GM12878 (cell line): ENCODE measurements at regions of chr4 and their contacts with region 1.

Region 1: DNA sequence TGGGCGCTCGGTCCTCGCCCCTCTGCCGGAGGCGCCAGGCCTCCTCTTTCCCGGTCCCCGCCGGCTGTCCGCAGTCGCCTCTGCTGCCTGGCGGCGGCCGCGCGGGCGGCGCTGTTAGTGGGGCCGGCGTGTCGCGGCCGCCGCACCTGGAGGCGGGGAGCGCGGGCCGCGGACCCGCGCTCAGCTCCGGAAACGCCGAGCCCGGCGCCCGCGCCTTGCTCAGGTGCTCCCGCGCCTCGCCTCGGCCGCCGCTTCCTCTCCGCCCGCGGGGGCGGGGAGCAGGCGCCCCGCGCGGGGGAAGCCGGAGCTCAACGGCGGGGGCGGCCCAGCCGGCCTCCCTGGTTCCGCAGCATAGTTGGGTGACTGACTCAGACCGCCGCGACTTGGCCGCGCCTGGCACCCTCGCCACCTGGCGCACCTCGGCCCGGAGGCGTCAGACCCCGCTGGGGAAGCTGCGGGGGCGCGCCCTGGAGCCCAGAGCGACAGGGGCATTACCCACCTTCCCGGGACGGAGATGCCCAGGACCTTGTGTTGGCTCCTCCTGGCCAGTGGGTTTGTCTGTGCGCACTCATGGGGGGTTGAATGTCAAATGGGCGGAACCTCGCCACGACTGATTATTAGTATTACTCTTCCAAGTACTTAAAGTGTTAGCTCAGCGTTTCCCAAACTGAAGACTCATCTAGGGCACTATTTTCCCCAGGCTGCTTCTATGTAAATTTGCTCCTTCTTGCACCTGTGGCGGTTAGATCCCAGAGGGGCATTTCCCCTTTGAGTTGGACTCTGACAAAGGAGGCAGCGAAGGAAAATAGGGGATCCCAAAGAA is at the start of gene ARAP2:
- DNase-seq: no peak
- ATAC-seq: peak; percentile 72
- H3K4me3 ChIP-seq: peak within 1 kb of the TSS; percentile 84
- H3K27ac ChIP-seq: peak within 1 kb of the TSS; percentile 88
- H3K4me1 ChIP-seq: no peaks in the 10 kb centered on the region
- H3K27me3 ChIP-seq: no peaks in the 10 kb centered on the region
- CTCF ChIP-seq: peak in 1 of 3 experiments; percentile 12; a peak in 1 of 6 replicates
- EP300 ChIP-seq: no peak
- POLR2A ChIP-seq: peak; percentile 66; the same call in 1 of the 2 replicates
- RAD21 ChIP-seq: 0 out of 2 replicates have a peak, but pooled peaks have one; percentile 10
- polyA plus RNA-seq, gene ARAP2: 5.4 to 5.7 TPM

Region 2: DNA sequence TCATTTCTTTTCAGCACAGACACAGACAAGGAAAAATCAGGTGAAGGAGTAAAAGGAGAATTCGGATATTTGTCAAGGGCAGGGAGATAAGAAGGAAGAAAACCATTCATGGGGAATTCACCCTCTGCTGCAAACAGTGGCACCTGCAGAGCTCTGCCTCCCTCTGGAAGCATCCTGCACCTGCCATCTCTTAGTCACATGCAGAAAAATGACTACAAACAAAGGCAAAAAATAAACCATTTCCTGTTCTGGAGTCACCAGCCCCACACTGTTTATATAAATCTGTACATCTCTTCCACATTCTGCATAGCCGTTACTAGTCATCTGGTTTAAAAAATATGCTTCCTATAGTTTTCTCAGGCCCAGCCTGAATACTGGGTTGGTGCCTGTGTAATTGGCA is 205.4 kb before region 1 on chr4:
- CTCF ChIA-PET with region 1: no interaction called
- POLR2A ChIA-PET with region 1: no interaction called
- RAD21 ChIA-PET with region 1: no interaction called
- SMC1A ChIA-PET with region 1: no interaction called
- in situ Hi-C with region 1: no loop called
- intact Hi-C with region 1: no loop called
- DNase-seq: no peak
- ATAC-seq: peak; percentile 45; the same call in 2 of the 3 replicates
- H3K4me3 ChIP-seq: no peak overlapping the region
- H3K27ac ChIP-seq: no peak overlapping the region
- H3K4me1 ChIP-seq: no peaks in the 10 kb centered on the region
- H3K27me3 ChIP-seq: no peaks in the 10 kb centered on the region
- CTCF ChIP-seq: no peak
- EP300 ChIP-seq: no peak
- POLR2A ChIP-seq: no peak
- RAD21 ChIP-seq: no peak

Region 3: DNA sequence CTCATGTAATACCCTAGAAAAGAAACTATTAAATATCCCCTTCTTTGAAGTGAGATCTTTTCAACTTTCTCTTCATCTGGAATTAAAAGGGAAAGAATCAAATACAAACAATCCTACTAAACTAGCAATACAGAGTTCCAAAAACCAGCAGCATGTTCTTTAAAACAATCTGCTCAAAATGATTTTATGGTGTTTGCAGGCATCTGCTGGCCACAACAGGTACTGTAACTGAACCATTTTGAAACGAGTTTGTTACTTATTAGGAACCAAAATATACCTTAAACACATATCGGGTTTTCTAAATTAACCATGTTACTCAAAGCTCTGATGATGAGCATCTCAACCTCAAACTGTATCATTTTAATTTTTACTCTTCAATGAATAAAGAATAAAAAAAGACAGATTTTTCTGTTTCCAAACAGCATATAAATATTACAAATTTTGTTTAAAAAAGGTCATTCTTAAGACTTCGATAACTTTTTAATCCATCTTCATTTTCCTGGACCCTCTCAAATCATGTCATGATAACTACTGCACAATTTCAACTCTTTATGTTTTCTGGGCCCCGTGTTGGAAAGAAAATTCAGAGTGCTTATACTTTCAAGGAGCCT is 56.6 kb before region 1 on chr4:
- CTCF ChIA-PET with region 1: interaction called, 7 read pairs
- POLR2A ChIA-PET with region 1: interaction called, 3 read pairs
- RAD21 ChIA-PET with region 1: interaction called, 11 read pairs
- SMC1A ChIA-PET with region 1: interaction called, 21 read pairs
- in situ Hi-C with region 1: no loop called
- intact Hi-C with region 1: no loop called
- DNase-seq: no peak
- ATAC-seq: peak; percentile 27; the same call in 1 of the 3 replicates
- H3K4me3 ChIP-seq: no peak overlapping the region
- H3K27ac ChIP-seq: no peak overlapping the region
- H3K4me1 ChIP-seq: peaks cover 6% of the 10 kb centered on the region
- H3K27me3 ChIP-seq: no peaks in the 10 kb centered on the region
- CTCF ChIP-seq: peak; percentile 54 to 70 (median 65)
- EP300 ChIP-seq: no peak
- POLR2A ChIP-seq: no peak
- RAD21 ChIP-seq: peak; percentile 70

Region 4: GRCh38 chr4:36224972-36225903 is 19.2 kb before region 1 on chr4:
- CTCF ChIA-PET with region 1: interaction called, 4 read pairs
- POLR2A ChIA-PET with region 1: interaction called, 10 read pairs
- RAD21 ChIA-PET with region 1: interaction called, 16 read pairs
- SMC1A ChIA-PET with region 1: interaction called, 16 read pairs
- in situ Hi-C with region 1: no loop called
- intact Hi-C with region 1: no loop called
- DNase-seq: no peak
- ATAC-seq: peak; percentile 62
- H3K4me3 ChIP-seq: peak overlapping the region; percentile 37; the same call in 1 of the 2 replicates
- H3K27ac ChIP-seq: no peak overlapping the region
- H3K4me1 ChIP-seq: no peaks in the 10 kb centered on the region
- H3K27me3 ChIP-seq: no peaks in the 10 kb centered on the region
- CTCF ChIP-seq: no peak
- EP300 ChIP-seq: no peak
- POLR2A ChIP-seq: no peak
- RAD21 ChIP-seq: no peak

Region 5: GRCh38 chr4:36260731-36261130 is 16.3 kb after region 1 on chr4:
- CTCF ChIA-PET with region 1: interaction called, 23 read pairs
- POLR2A ChIA-PET with region 1: interaction called, 9 read pairs
- RAD21 ChIA-PET with region 1: interaction called, 51 read pairs
- SMC1A ChIA-PET with region 1: interaction called, 78 read pairs
- in situ Hi-C with region 1: no loop called
- intact Hi-C with region 1: no loop called
- DNase-seq: no peak
- ATAC-seq: no peak
- H3K4me3 ChIP-seq: no peak overlapping the region
- H3K27ac ChIP-seq: no peak overlapping the region
- H3K4me1 ChIP-seq: peaks cover 4% of the 10 kb centered on the region; the same call in 1 of the 2 replicates
- H3K27me3 ChIP-seq: no peaks in the 10 kb centered on the region
- CTCF ChIP-seq: no peak
- EP300 ChIP-seq: no peak
- POLR2A ChIP-seq: no peak
- RAD21 ChIP-seq: no peak

Region 6: DNA sequence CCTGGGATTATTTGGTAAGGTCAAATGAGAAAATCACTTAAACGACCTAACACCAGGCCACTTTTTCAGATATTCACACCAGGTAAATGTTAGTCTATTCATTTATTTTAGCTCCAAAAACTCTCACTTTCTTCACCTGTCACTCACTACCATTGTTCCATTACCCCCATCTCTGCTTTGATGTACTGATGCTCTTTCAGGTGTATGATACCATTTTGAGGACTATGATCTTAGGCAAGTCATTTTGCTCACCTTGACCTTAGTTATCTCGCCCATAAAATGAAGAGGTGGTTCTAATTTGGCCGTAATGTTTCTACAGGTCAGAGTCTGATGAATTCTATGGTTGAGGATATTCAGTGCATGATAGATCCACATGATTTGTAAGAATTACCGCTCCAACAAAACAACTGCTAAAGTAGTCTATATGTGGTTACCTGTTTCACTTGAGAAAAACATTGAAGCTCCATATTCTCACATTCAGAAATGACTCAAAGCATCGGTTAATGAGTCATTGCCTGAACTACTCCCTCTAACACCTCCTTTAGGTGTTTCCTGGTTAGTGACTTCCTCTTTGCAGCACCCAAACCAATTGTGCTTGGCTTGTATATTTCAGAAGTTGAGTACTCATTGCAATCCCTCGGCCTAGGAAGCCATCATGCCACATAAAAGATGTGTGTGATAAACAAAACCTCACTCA is 41.5 kb after region 1 on chr4:
- CTCF ChIA-PET with region 1: interaction called, 11 read pairs
- POLR2A ChIA-PET with region 1: interaction called, 4 read pairs
- RAD21 ChIA-PET with region 1: interaction called, 23 read pairs
- SMC1A ChIA-PET with region 1: interaction called, 18 read pairs
- in situ Hi-C with region 1: no loop called
- intact Hi-C with region 1: loop called (anchors 1 kb)
- DNase-seq: peak; percentile 93
- ATAC-seq: peak; percentile 99
- H3K4me3 ChIP-seq: peak overlapping the region; percentile 38
- H3K27ac ChIP-seq: peak overlapping the region; percentile 54
- H3K4me1 ChIP-seq: peaks cover 7% of the 10 kb centered on the region; the same call in 1 of the 2 replicates
- H3K27me3 ChIP-seq: no peaks in the 10 kb centered on the region
- CTCF ChIP-seq: no peak
- EP300 ChIP-seq: peak; percentile 90 to 98
- POLR2A ChIP-seq: no peak
- RAD21 ChIP-seq: peak; percentile 42

Region 7: GRCh38 chr4:36385951-36386571 is 141.6 kb after region 1 on chr4:
- CTCF ChIA-PET with region 1: no interaction called
- POLR2A ChIA-PET with region 1: interaction called, 3 read pairs
- RAD21 ChIA-PET with region 1: no interaction called
- SMC1A ChIA-PET with region 1: no interaction called
- in situ Hi-C with region 1: no loop called
- intact Hi-C with region 1: loop called (anchors 2 kb)
- DNase-seq: peak; percentile 63
- ATAC-seq: peak; percentile 94
- H3K4me3 ChIP-seq: 0 out of 2 replicates have a peak overlapping the region, but pooled peaks have one; percentile 7
- H3K27ac ChIP-seq: 0 out of 2 replicates have a peak overlapping the region, but pooled peaks have one; percentile 41
- H3K4me1 ChIP-seq: peaks cover 9% of the 10 kb centered on the region; the same call in 1 of the 2 replicates
- H3K27me3 ChIP-seq: no peaks in the 10 kb centered on the region
- CTCF ChIP-seq: no peak
- EP300 ChIP-seq: no peak; a peak in 1 of 4 replicates
- POLR2A ChIP-seq: no peak
- RAD21 ChIP-seq: no peak